AG04449 (cell line): ENCODE measurements at regions of chr3 and their contacts with region 1.

Region 1: GRCh38 chr3:185204894-185205293 is 49.0 kb downstream of the EHHADH start:
- DNase-seq: no peak
- H3K4me3 ChIP-seq: no peak overlapping the region
- CTCF ChIP-seq: no peak

Region 2: DNA sequence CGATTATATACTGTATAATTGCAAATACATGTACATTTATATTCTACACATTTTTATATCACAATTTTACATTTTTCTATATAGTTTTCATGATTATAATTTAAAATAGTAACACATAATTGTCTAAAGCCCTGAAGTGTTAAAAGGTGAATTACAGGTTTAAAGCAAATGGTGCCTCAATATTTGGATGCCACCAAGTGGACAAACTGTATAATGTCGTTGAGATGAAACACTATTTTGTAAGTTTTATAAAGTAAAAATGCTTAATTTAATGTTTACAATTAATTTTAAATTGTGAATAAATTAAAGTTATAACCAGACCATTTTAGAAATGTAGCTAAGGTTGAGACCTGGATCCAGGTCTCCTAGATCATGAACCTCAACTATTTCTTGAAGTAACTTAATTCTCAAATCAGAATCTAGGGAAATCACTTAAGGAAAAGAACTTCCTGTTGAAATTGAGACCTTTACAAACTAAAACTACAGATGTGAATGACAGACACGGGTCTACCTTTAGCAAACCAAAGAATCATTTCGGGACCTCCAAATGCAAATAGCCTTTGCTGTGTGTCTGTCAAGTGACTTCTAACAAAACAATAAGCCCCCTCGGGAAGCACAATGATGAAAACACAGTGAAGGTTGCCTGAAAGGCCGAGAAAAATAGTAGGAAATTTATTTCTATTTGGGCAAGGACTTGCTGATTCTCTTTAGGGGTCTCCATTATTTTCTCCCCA is 11.1 kb after region 1 on chr3:
- CTCF ChIA-PET with region 1: interaction called, 15 read pairs
- POLR2A ChIA-PET with region 1: no interaction called
- DNase-seq: no peak
- H3K4me3 ChIP-seq: no peak overlapping the region
- CTCF ChIP-seq: peak; percentile 35

Region 3: GRCh38 chr3:185233328-185233727 is 28.4 kb after region 1 on chr3:
- CTCF ChIA-PET with region 1: no interaction called
- POLR2A ChIA-PET with region 1: no interaction called
- DNase-seq: no peak
- H3K4me3 ChIP-seq: no peak overlapping the region
- CTCF ChIP-seq: no peak